ENCODE measurements at regions of chr15 and their contacts with region 1.

Region 1: GRCh38 chr15:63048115-63048775 is 5.7 kb downstream of the TPM1 start:
- DNase-seq: peak; percentile 90
- H3K4me3 Mint-ChIP-seq: peak overlapping the region; percentile 90
- H3K27ac Mint-ChIP-seq: no peak overlapping the region
- H3K4me1 Mint-ChIP-seq: peaks cover 28% of the 10 kb centered on the region
- H3K27me3 Mint-ChIP-seq: peaks cover 52% of the 10 kb centered on the region

Region 2: DNA sequence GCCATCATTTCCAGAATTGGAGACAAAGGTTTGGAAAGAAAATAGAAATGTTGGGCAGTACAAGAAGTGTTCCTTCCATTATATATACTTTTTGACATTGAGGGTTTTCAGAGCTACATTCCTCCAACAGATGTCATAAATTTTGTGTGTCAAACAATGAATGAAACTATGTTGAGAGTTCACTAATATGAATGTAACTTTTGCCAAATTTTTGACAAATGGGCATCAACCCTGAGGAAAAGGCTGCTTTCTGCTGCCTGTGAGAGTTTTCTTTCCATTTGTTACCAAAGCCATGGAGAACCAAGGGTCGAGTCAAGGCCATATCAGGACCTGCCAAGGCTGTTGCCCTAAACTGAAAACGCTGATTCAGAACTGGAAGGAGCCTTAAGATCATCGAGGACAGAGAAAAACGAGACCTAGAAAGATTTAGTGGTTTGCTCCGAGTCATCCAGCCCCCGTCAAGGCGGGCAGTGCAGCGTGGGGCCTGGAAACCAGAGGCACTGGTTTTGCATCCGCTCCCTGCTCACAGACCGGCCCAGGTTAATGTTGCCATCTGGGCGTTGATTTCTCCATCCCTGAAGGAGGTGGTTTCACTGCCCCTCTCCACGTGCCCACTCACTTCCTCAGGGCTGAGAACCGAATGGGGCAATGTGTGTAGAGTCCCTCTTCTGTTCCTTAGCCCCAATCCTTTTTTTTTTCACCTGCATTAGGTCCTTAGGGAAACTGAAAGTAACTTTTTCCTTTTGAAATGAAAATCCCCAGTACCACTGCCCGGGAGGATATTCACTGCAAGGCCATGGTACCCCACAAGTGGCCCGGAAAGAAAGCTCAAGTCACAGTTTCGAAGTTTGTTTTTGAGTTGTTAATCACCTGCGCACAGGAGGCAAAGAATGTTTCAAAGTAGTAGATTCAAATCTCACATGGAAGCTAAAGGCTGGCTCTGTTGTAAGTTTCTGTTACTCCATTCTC is 27.1 kb after region 1 on chr15:
- CTCF ChIA-PET with region 1: interaction called, 31 read pairs
- DNase-seq: no peak
- H3K4me3 Mint-ChIP-seq: no peak overlapping the region
- H3K27ac Mint-ChIP-seq: no peak overlapping the region
- H3K4me1 Mint-ChIP-seq: peaks cover 4% of the 10 kb centered on the region
- H3K27me3 Mint-ChIP-seq: peaks cover 28% of the 10 kb centered on the region

Region 3: GRCh38 chr15:63093486-63094205 is 45.4 kb after region 1 on chr15:
- CTCF ChIA-PET with region 1: interaction called, 35 read pairs
- DNase-seq: peak; percentile 85
- H3K4me3 Mint-ChIP-seq: no peak overlapping the region
- H3K27ac Mint-ChIP-seq: no peak overlapping the region
- H3K4me1 Mint-ChIP-seq: peaks cover 4% of the 10 kb centered on the region
- H3K27me3 Mint-ChIP-seq: peaks cover 14% of the 10 kb centered on the region

Region 4: GRCh38 chr15:63402498-63403253 is 354.4 kb after region 1 on chr15:
- CTCF ChIA-PET with region 1: interaction called, 13 read pairs
- DNase-seq: no peak
- H3K4me3 Mint-ChIP-seq: no peak overlapping the region
- H3K27ac Mint-ChIP-seq: no peak overlapping the region
- H3K4me1 Mint-ChIP-seq: peaks cover 14% of the 10 kb centered on the region
- H3K27me3 Mint-ChIP-seq: peaks cover 8% of the 10 kb centered on the region